H1 (cell line): ENCODE measurements at regions of chr14 and their contacts with region 1.

Region 1: DNA sequence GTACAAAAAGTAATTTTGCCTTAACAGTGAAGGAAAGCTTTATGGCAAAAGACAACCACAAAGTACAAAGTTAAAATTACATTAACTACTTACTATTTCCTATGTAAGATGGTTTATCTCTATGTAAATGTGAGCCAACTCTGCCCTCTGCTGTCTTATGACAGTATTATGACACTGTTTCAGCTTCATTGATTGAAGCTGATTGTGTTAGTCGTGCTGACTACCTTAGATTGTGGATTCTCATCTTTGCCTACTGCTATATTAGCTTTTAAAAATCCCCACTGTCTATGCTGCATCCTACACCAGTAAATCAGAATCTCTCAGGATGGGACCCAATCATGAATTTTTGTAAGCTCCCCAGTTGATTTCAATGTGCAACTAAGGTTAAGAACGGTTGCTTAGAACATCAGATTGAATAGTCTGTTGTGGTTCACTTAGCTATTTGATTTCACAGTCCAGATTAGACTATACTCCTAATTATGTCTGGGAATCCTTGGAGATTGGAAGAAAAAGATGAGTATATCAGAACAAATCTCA is 12.2 kb upstream of the SPTB start:
- DNase-seq: no peak
- H3K4me3 ChIP-seq: no peak overlapping the region
- H3K27ac ChIP-seq: no peak overlapping the region
- H3K4me1 ChIP-seq: no peaks in the 10 kb centered on the region
- H3K27me3 ChIP-seq: no peaks in the 10 kb centered on the region
- CTCF ChIP-seq: peak in 2 of 3 experiments; percentile 59 to 64; a peak in 2 of 4 replicates
- EP300 ChIP-seq: no peak
- POLR2A ChIP-seq: no peak
- RAD21 ChIP-seq: peak; percentile 80 to 90

Region 2: DNA sequence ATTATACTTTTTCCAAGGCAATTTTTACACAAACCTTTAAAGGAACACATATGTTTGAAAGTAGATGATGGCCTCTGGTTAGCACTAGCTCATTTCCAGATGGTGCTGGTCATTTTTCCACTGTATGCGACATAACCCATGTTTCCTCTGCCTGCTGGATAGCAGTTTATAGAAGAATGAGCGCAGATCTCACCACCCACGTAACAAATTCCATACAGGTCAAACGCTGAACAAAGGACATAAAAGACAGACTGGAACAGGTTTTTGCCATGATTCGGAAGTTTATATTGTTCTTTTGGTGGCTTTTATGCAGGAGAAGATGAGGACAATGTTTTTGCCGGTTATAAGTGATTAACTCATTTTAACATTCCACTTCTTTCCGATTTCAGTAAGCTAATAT is 311.4 kb before region 1 on chr14:
- CTCF ChIA-PET with region 1: no interaction called
- POLR2A ChIA-PET with region 1: no interaction called
- DNase-seq: no peak
- H3K4me3 ChIP-seq: no peak overlapping the region
- H3K27ac ChIP-seq: no peak overlapping the region
- H3K4me1 ChIP-seq: peaks cover 3 to 14% (median 6%) of the 10 kb centered on the region in 4 experiments; a peak in 4 of 7 replicates
- H3K27me3 ChIP-seq: no peaks in the 10 kb centered on the region
- CTCF ChIP-seq: no peak
- EP300 ChIP-seq: no peak
- POLR2A ChIP-seq: no peak
- RAD21 ChIP-seq: no peak

Region 3: DNA sequence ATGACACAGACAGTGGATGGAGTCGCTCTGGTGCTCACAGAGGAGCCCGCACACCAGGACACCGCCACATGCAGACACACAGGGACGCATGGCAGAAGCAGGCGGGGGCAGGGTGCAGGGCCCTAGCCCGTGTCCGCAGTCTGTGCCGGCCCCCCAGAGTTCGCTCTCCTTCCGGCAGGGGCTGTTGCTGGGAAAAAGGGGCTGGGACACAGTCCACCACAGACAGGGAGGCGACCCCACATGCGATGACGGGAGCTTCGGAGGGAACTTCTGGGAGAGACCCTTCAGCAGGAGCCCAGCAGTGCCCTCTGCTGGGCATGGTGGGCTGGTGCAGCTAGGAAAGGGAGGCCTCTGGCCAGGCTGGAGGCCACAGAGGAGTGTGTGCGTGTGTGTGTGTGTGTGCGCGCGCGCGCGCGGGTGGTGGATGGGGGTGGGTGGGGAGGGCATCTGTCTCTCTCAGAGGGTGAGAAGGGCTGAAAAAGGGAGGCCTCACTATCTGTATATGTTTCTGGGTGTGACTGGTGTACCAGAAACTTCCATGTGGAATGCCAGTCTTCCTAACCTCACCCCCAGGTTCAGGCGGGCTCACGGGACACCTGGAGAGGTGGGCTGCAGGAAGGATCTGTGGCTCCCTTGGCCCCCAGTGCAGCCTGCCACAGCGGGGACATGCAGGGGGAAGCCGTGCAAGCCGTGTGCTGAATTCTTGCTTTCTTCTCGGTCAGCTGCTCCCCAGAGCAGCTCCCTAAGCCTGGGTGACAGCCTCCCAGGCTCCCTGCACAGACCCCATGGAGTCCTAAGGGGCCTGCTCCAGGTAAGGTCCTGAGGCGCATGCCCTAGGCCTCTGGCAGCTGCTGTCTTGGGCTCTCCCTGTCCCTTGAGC is 127.0 kb before region 1 on chr14:
- CTCF ChIA-PET with region 1: interaction called, 64 read pairs
- POLR2A ChIA-PET with region 1: no interaction called
- DNase-seq: peak; percentile 61 to 86
- H3K4me3 ChIP-seq: peak overlapping the region in 2 of 4 experiments; percentile 2 to 27; a peak in 2 of 8 replicates
- H3K27ac ChIP-seq: no peak overlapping the region
- H3K4me1 ChIP-seq: peaks cover 4 to 34% (median 24%) of the 10 kb centered on the region in 4 experiments
- H3K27me3 ChIP-seq: peaks cover 0 to 2% (median 0%) of the 10 kb centered on the region in 4 experiments; a peak in 3 of 7 replicates
- CTCF ChIP-seq: peak in 2 of 3 experiments; percentile 89 to 90; a peak in 3 of 4 replicates
- EP300 ChIP-seq: no peak
- POLR2A ChIP-seq: no peak
- RAD21 ChIP-seq: peak; percentile 82 to 84

Region 4: DNA sequence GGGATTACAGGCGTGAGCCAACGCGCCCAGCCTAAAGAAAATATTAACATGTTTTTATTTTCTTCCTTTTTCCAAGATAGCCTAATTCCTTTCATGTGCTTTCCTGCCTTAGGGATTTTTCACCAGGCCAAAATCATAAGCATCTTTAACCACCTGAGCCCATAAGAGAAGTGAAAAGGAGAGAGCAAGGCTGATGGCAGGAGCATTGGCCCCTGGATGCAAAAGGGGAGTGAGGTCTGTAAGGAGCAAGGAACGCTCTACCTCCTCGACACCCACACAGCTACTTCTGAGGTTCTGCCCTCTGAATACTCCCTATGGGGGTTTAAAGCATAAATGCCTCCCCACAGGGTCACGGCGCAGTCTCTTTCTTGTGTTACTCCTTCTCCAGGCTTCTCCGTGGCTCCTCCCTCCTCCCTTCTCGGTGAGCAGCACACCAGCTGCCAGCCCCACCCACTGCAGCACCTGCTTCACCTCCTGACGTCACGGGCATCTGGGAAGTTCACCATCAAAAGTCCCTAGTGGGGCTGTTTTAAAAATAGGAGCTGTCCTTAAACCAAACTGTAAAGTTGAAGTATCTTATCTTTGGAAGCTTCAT is 79.6 kb before region 1 on chr14:
- CTCF ChIA-PET with region 1: interaction called, 56 read pairs
- POLR2A ChIA-PET with region 1: no interaction called
- DNase-seq: peak in 1 of 2 experiments; percentile 71
- H3K4me3 ChIP-seq: peak overlapping the region in 1 of 4 experiments; percentile 19; a peak in 1 of 8 replicates
- H3K27ac ChIP-seq: no peak overlapping the region
- H3K4me1 ChIP-seq: no peaks in the 10 kb centered on the region; a peak in 1 of 7 replicates
- H3K27me3 ChIP-seq: no peaks in the 10 kb centered on the region; a peak in 1 of 7 replicates
- CTCF ChIP-seq: no peak
- EP300 ChIP-seq: no peak
- POLR2A ChIP-seq: no peak
- RAD21 ChIP-seq: no peak

Region 5: GRCh38 chr14:64855721-64856528 is 36.0 kb before region 1 on chr14:
- CTCF ChIA-PET with region 1: interaction called, 18 read pairs
- POLR2A ChIA-PET with region 1: no interaction called
- DNase-seq: no peak
- H3K4me3 ChIP-seq: no peak overlapping the region
- H3K27ac ChIP-seq: no peak overlapping the region
- H3K4me1 ChIP-seq: peaks cover 12 to 19% (median 14%) of the 10 kb centered on the region in 4 experiments
- H3K27me3 ChIP-seq: no peaks in the 10 kb centered on the region
- CTCF ChIP-seq: no peak
- EP300 ChIP-seq: no peak
- POLR2A ChIP-seq: no peak
- RAD21 ChIP-seq: no peak

Region 6: GRCh38 chr14:64880221-64881121 is 11.4 kb before region 1 on chr14:
- CTCF ChIA-PET with region 1: interaction called, 97 read pairs
- POLR2A ChIA-PET with region 1: interaction called, 6 read pairs
- DNase-seq: peak in 1 of 2 experiments; percentile 88
- H3K4me3 ChIP-seq: peak overlapping the region; percentile 56 to 82 (median 66)
- H3K27ac ChIP-seq: no peak overlapping the region
- H3K4me1 ChIP-seq: peaks cover 0 to 3% (median 1%) of the 10 kb centered on the region in 4 experiments; a peak in 5 of 7 replicates
- H3K27me3 ChIP-seq: peaks cover 0 to 34% (median 24%) of the 10 kb centered on the region in 4 experiments; a peak in 6 of 7 replicates
- CTCF ChIP-seq: no peak
- EP300 ChIP-seq: no peak
- POLR2A ChIP-seq: peak in 1 of 2 experiments; percentile 28; a peak in 1 of 3 replicates
- RAD21 ChIP-seq: no peak

Region 7: GRCh38 chr14:64914237-64914971 is 22.5 kb after region 1 on chr14 and contains the start of gene CHURC1:
- CTCF ChIA-PET with region 1: interaction called, 39 read pairs
- POLR2A ChIA-PET with region 1: no interaction called
- DNase-seq: peak; percentile 89 to 96
- H3K4me3 ChIP-seq: peak within 1 kb of the TSS; percentile 75 to 90 (median 89)
- H3K27ac ChIP-seq: peak within 1 kb of the TSS; percentile 86
- H3K4me1 ChIP-seq: peaks cover 0 to 4% (median 3%) of the 10 kb centered on the region in 4 experiments; a peak in 4 of 7 replicates
- H3K27me3 ChIP-seq: no peaks in the 10 kb centered on the region
- CTCF ChIP-seq: peak in 1 of 3 experiments; percentile 9; a peak in 1 of 4 replicates
- EP300 ChIP-seq: no peak
- POLR2A ChIP-seq: peak in 1 of 2 experiments; percentile 97; a peak in 2 of 3 replicates
- RAD21 ChIP-seq: 0 out of 4 replicates have a peak, but pooled peaks of 1 of the 2 experiments have one; percentile 4
- total RNA-seq, gene CHURC1: 50.2 and 55.6 TPM in 2 replicates